Sciatic nerve (tissue), 2 donors: ENCODE measurements at regions of chr4 and their contacts with region 1.

Region 1: GRCh38 chr4:114312338-114312737 is 286.3 kb upstream of the UGT8 start:
- DNase-seq: no peak
- ATAC-seq: no peak

Region 2: GRCh38 chr4:114287079-114287696 is 25.1 kb before region 1 on chr4:
- intact Hi-C with region 1: no loop called
- DNase-seq: no peak
- ATAC-seq: no peak

Region 3: GRCh38 chr4:114349543-114350175 is 37.3 kb after region 1 on chr4:
- intact Hi-C with region 1: no loop called
- DNase-seq: no peak
- ATAC-seq: no peak

Region 4: DNA sequence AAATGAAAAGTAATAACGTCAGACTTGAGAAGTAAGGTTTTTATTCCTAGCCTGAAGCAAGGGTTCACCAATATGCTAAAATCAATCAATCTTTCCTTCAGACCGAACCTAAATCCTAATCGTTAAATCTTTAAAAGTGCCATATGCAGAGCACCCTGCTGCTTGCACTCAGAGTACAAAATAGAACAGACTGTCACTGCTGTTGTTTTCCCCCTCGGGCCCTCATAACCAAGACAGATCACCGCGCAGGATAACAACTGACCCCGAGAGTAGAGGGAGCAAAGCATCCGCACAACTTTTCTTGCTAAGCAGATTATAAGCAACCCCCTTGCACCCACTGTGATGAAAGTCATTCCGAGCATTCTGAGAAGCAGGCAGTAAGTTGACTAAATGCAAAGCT is 1351.9 kb after region 1 on chr4:
- intact Hi-C with region 1: loop called (anchors 5 kb)
- DNase-seq: no peak
- ATAC-seq: no peak